ENCODE measurements at regions of chr10 and their contacts with region 1.

Region 1: GRCh38 chr10:119409866-119410299 is 132.6 kb downstream of the RGS10 start:
- DNase-seq: peak; percentile 90 to 96 (median 95)
- ATAC-seq: peak; percentile 76 to 81
- H3K4me3 ChIP-seq: no peak overlapping the region
- H3K27ac ChIP-seq: peak overlapping the region; percentile 93
- H3K4me1 ChIP-seq: peaks cover 36% of the 10 kb centered on the region
- H3K27me3 ChIP-seq: no peaks in the 10 kb centered on the region

Region 2: GRCh38 chr10:119253433-119254174 is 156.3 kb before region 1 on chr10:
- intact Hi-C with region 1: no loop called
- DNase-seq: peak; percentile 81 to 92 (median 89)
- ATAC-seq: peak; percentile 79 to 85
- H3K4me3 ChIP-seq: no peak overlapping the region
- H3K27ac ChIP-seq: peak overlapping the region; percentile 74
- H3K4me1 ChIP-seq: peaks cover 43% of the 10 kb centered on the region
- H3K27me3 ChIP-seq: no peaks in the 10 kb centered on the region

Region 3: GRCh38 chr10:119370111-119370741 is 39.7 kb before region 1 on chr10:
- intact Hi-C with region 1: loop called in 1 of 4 experiments (anchors 5 kb)
- DNase-seq: peak; percentile 75 to 85 (median 85)
- ATAC-seq: peak; percentile 42 to 78
- H3K4me3 ChIP-seq: no peak overlapping the region
- H3K27ac ChIP-seq: peak overlapping the region; percentile 95
- H3K4me1 ChIP-seq: peaks cover 48% of the 10 kb centered on the region
- H3K27me3 ChIP-seq: no peaks in the 10 kb centered on the region

Measured in right cardiac atrium (tissue), 5 donors.